ENCODE measurements at regions of chrX and their contacts with region 1.

Region 1: GRCh38 chrX:132292793-132293192 is 73.5 kb upstream of the RAP2C start:
- DNase-seq: peak; percentile 54
- H3K4me3 ChIP-seq: no peak overlapping the region
- H3K27ac ChIP-seq: no peak overlapping the region
- H3K4me1 ChIP-seq: no peaks in the 10 kb centered on the region
- H3K27me3 ChIP-seq: no peaks in the 10 kb centered on the region; the same call in 1 of the 2 replicates
- CTCF ChIP-seq: peak; percentile 80
- EP300 ChIP-seq: no peak
- RAD21 ChIP-seq: peak; percentile 76

Region 2: GRCh38 chrX:132270699-132271098 is 22.1 kb before region 1 on chrX:
- CTCF ChIA-PET with region 1: interaction called, 28 read pairs
- POLR2A ChIA-PET with region 1: no interaction called
- DNase-seq: no peak
- H3K4me3 ChIP-seq: no peak overlapping the region
- H3K27ac ChIP-seq: no peak overlapping the region; a peak in 1 of 4 replicates
- H3K4me1 ChIP-seq: peaks cover 0 to 3% of the 10 kb centered on the region in 2 experiments; a peak in 2 of 4 replicates
- H3K27me3 ChIP-seq: no peaks in the 10 kb centered on the region
- CTCF ChIP-seq: no peak
- EP300 ChIP-seq: no peak
- RAD21 ChIP-seq: no peak

Region 3: DNA sequence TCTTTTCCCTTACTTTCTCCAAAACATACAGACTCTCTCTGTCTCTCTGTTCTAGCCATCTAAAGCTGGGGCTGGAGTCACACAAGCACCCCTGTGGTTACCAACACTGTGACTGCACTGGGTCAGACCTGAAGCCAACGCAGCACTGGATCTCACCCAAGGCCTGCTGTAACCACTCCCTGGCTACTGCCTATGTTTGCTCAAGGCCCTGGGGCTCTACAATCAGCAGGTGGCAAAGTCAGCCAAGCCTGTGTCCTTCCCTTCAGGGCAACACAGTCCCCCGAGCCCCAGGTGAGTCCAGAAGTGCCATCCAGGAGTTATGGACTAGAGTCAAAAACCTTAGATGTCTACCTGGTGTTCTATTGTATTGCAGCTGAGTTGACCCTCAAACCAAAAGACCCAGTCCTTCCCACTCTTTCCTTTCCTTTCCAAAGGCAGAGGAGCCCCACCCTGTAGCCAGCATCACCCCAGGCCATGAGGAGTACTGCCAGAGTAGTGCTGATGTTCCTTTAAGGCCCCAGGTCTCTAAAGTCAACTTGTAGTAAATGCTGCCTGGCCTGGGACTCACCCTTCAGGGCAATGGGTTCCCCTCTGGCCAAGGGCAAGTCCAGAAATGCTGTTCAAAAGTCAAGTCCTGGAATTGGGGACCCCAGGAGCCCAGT is 14.7 kb before region 1 on chrX:
- CTCF ChIA-PET with region 1: interaction called, 12 read pairs
- POLR2A ChIA-PET with region 1: no interaction called
- DNase-seq: no peak
- H3K4me3 ChIP-seq: no peak overlapping the region
- H3K27ac ChIP-seq: no peak overlapping the region
- H3K4me1 ChIP-seq: no peaks in the 10 kb centered on the region
- H3K27me3 ChIP-seq: no peaks in the 10 kb centered on the region
- CTCF ChIP-seq: no peak
- EP300 ChIP-seq: no peak
- RAD21 ChIP-seq: no peak

Region 4: DNA sequence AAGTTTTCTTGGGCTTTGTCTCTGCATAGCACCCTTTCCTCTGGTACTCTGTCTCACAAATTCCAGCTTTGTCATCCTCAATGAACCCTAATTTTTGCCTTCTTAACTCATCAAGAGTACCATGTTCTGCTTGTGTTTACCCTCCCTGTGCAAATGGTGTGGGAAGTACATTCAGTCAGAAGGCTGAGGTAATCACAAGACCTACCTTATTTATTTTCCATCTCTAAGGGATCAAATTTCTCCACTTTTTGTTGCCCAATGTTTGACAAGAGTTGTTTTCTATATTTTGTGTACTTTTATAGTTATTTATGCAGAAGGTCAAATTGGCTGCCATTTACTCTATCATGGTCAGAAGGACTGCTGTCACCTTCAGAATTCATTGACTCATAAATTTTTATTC is 11.8 kb after region 1 on chrX:
- CTCF ChIA-PET with region 1: interaction called, 19 read pairs
- POLR2A ChIA-PET with region 1: no interaction called
- DNase-seq: no peak
- H3K4me3 ChIP-seq: no peak overlapping the region
- H3K27ac ChIP-seq: no peak overlapping the region
- H3K4me1 ChIP-seq: no peaks in the 10 kb centered on the region
- H3K27me3 ChIP-seq: no peaks in the 10 kb centered on the region
- CTCF ChIP-seq: no peak
- EP300 ChIP-seq: no peak
- RAD21 ChIP-seq: no peak

Region 5: GRCh38 chrX:132610541-132610940 is 317.7 kb after region 1 on chrX:
- CTCF ChIA-PET with region 1: interaction called, 40 read pairs
- POLR2A ChIA-PET with region 1: no interaction called
- DNase-seq: no peak
- H3K4me3 ChIP-seq: no peak overlapping the region
- H3K27ac ChIP-seq: no peak overlapping the region
- H3K4me1 ChIP-seq: no peaks in the 10 kb centered on the region
- H3K27me3 ChIP-seq: no peaks in the 10 kb centered on the region; the same call in 1 of the 2 replicates
- CTCF ChIP-seq: no peak
- EP300 ChIP-seq: no peak
- RAD21 ChIP-seq: no peak

Region 6: DNA sequence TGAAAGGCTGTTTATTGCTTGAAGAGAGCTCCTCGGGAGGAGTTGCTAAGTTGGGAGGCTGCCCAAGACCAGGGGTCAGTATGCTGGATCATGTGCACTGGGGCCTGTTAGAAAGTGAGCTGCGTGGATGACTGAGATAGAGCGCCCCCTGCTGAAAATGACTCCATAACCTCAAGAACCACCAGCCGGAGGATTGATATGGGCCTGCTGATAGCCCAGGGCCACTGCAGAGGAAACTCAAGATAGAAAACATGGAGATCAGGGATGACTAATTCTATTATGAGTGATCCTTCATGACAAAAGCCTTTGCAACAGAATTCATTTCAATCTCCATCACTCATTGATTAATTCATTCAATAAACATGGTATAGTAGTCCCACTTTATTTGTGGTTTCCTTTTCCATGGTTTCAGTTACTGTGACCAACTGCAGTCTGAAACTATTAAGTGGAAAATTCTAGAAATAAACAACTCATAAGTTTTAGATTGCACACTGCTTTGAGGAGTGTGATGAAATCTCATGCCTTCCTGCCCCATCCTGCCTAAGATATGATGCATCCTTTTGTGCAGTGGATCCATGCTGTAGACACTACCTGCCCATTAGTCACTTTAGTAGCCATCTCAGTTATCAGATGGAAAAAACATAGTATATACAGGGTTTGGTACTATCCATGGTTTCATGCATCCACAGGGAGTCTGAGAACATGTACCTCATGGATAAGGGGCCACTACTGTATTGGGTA is 322.8 kb after region 1 on chrX:
- CTCF ChIA-PET with region 1: interaction called, 40 read pairs
- POLR2A ChIA-PET with region 1: no interaction called
- DNase-seq: no peak
- H3K4me3 ChIP-seq: no peak overlapping the region; a peak in 1 of 4 replicates
- H3K27ac ChIP-seq: no peak overlapping the region
- H3K4me1 ChIP-seq: no peaks in the 10 kb centered on the region
- H3K27me3 ChIP-seq: peaks cover 6% of the 10 kb centered on the region; the same call in 1 of the 2 replicates
- CTCF ChIP-seq: peak; percentile 57
- EP300 ChIP-seq: no peak
- RAD21 ChIP-seq: peak; percentile 31

Region 7: GRCh38 chrX:132631579-132632232 is 338.9 kb after region 1 on chrX:
- CTCF ChIA-PET with region 1: interaction called, 17 read pairs
- POLR2A ChIA-PET with region 1: no interaction called
- DNase-seq: peak; percentile 5
- H3K4me3 ChIP-seq: no peak overlapping the region
- H3K27ac ChIP-seq: no peak overlapping the region
- H3K4me1 ChIP-seq: no peaks in the 10 kb centered on the region
- H3K27me3 ChIP-seq: peaks cover 20% of the 10 kb centered on the region
- CTCF ChIP-seq: peak; percentile 72
- EP300 ChIP-seq: no peak
- RAD21 ChIP-seq: peak; percentile 64

Measured in SK-N-SH (cell line).